ENCODE measurements at regions of chr10 and their contacts with region 1.

Region 1: GRCh38 chr10:92440578-92440977 is 133.3 kb downstream of the IDE start:
- DNase-seq: no peak
- CTCF ChIP-seq: no peak

Region 2: GRCh38 chr10:92082583-92083280 is 357.8 kb before region 1 on chr10:
- in situ Hi-C with region 1: loop called (anchors 5 kb)
- DNase-seq: no peak
- CTCF ChIP-seq: no peak

Region 3: GRCh38 chr10:93088466-93088865 is 647.9 kb after region 1 on chr10:
- in situ Hi-C with region 1: no loop called
- DNase-seq: no peak
- CTCF ChIP-seq: no peak

Measured in GM13976 (cell line).